ENCODE measurements at regions of chr5 and their contacts with region 1.

Region 1: DNA sequence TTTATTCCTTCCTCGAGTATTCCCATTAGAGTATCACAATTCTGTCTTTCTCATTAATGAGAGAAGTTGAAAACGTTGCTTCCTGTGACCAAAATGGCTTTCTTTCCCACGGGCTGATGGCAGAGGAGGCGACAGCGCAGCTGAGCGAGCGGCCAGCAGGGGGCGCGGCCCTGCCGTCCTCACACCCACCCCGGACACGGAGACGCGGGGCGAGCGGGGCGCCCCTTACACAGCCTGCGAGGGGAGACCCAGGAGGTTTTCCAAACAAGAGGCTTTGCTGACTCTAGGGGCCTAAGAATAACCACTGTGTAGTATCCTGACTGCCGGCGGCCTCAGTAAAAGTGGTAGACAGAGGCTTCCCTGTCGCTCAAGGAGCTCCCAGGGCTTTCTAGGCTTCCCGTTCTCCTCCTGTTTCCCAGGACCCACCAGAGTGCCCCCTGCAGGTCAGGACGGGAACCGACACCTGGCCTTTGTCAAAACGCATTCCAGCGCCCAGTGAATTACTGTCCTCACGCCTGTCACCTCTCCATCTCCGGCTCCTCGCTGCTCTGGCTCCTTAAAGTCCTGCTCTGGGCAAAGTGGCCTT is 27.3 kb upstream of the FGF1 start:
- DNase-seq: peak; percentile 92
- ATAC-seq: peak; percentile 97
- H3K4me3 Mint-ChIP-seq: peak overlapping the region; percentile 72
- H3K27ac Mint-ChIP-seq: peak overlapping the region; percentile 40
- H3K4me1 Mint-ChIP-seq: peaks cover 5% of the 10 kb centered on the region
- H3K27me3 Mint-ChIP-seq: no peaks in the 10 kb centered on the region
- CTCF ChIP-seq: peak; percentile 93

Region 2: GRCh38 chr5:142095651-142096330 is 617.4 kb before region 1 on chr5:
- CTCF ChIA-PET with region 1: no interaction called
- POLR2A ChIA-PET with region 1: no interaction called
- intact Hi-C with region 1: no loop called
- DNase-seq: peak; percentile 97
- ATAC-seq: peak; percentile 88
- H3K4me3 Mint-ChIP-seq: peak overlapping the region; percentile 51
- H3K27ac Mint-ChIP-seq: peak overlapping the region; percentile 93
- H3K4me1 Mint-ChIP-seq: peaks cover 78% of the 10 kb centered on the region
- H3K27me3 Mint-ChIP-seq: no peaks in the 10 kb centered on the region
- CTCF ChIP-seq: no peak

Region 3: GRCh38 chr5:142439207-142439860 is 273.9 kb before region 1 on chr5:
- CTCF ChIA-PET with region 1: no interaction called
- POLR2A ChIA-PET with region 1: no interaction called
- intact Hi-C with region 1: no loop called
- DNase-seq: no peak
- ATAC-seq: no peak
- H3K4me3 Mint-ChIP-seq: no peak overlapping the region
- H3K27ac Mint-ChIP-seq: no peak overlapping the region
- H3K4me1 Mint-ChIP-seq: peaks cover 10% of the 10 kb centered on the region
- H3K27me3 Mint-ChIP-seq: peaks cover 16% of the 10 kb centered on the region
- CTCF ChIP-seq: no peak

Region 4: DNA sequence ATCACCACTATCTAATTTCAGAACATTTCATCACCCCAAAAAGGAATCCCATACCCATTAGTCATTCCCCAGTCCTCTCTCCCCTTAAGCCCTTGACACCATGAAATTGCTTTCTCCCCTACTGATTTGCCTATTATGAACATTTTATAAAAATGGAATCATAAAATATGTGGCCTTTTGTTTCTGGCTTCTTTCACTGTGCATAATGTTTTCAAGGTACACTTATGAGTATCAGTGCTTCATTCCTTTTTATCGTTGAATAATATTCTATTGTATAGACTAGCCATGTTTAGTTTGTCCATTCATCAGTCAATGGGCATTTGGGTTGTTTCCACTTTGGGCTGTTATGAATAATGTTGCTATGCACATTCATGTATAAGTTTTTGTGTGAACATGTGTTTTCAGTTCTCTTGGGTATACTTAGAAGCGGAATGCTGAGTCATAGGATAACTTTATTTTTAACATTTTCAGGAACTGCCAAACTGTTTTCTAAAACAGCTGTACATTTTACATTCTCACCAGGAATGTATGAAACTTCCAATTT is 13.0 kb after region 1 on chr5:
- CTCF ChIA-PET with region 1: interaction called, 36 read pairs
- POLR2A ChIA-PET with region 1: no interaction called
- intact Hi-C with region 1: no loop called
- DNase-seq: no peak
- ATAC-seq: peak; percentile 49
- H3K4me3 Mint-ChIP-seq: no peak overlapping the region
- H3K27ac Mint-ChIP-seq: peak overlapping the region; percentile 35
- H3K4me1 Mint-ChIP-seq: peaks cover 9% of the 10 kb centered on the region
- H3K27me3 Mint-ChIP-seq: no peaks in the 10 kb centered on the region
- CTCF ChIP-seq: no peak

Region 5: DNA sequence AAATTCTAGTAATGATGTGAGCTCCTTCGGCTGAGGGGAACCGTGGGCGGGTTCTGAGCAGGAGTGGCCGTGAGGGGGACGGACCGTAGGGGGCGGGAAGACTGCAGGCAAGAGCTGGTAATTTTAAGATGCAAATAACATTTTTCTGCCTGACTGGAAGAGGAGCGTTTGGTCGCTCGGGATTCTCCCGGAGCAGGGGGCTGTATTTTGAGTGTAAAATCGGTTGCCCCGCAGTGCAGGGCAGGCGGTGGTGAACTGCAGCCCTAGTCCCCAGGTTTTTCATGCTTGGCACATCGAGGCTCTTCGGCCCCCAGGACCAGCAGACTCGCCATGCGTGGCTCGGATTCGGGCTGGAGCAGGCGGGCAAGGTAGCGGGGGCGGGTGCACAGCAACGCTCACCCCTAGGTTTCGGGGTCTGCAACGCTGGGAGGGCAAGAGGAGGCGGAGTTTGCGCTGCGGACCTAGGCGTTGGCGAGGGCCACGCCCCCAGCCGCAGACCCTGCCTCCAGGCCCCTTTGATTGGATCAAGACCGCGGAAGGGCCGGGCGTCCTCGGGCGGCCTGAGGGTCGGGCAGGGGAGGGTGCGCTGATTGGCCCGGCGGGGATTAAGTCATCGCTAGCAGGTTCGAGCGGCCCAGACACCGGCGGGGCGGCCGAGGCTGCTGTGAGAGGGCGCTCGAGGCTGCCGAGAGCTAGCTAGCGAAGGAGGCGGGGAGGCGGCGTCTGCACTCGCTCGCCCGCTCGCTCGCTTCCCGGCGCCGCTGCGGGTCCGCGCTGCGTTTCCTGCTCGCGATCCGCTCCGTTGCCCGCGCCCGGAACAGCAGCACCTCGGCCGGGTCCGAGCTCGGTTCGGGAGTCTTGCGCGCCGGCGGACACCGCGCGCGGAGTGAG is 56.8 kb after region 1 on chr5 and contains the start of gene ARHGAP26:
- CTCF ChIA-PET with region 1: interaction called, 14 read pairs
- POLR2A ChIA-PET with region 1: no interaction called
- intact Hi-C with region 1: no loop called
- DNase-seq: peak; percentile 96
- ATAC-seq: peak; percentile 93
- H3K4me3 Mint-ChIP-seq: peak within 1 kb of the TSS; percentile 94
- H3K27ac Mint-ChIP-seq: peak within 1 kb of the TSS; percentile 89
- H3K4me1 Mint-ChIP-seq: peaks cover 36% of the 10 kb centered on the region
- H3K27me3 Mint-ChIP-seq: no peaks in the 10 kb centered on the region
- CTCF ChIP-seq: no peak
- total RNA-seq, gene ARHGAP26: 12.7 to 18.0 TPM

Region 6: DNA sequence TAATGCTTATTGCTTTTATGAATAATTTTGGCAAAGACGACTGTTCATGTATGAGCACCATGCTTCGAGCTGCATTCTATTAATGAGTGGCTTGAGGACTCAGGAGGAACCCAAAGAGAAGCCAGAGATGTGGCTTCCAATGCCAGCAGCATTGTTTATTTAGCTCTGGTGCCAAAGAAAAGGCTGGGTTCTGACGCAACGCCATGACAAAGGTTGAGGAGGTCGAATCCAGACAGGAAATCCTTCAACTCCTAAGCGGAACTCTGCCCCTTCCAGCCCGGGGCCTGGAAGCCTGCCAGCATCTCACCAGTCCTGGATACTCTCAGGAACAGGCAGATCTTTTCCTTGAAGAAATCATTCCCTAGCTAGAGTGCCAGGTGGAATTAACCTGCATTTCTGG is 161.3 kb after region 1 on chr5:
- CTCF ChIA-PET with region 1: interaction called, 673 read pairs
- POLR2A ChIA-PET with region 1: no interaction called
- intact Hi-C with region 1: no loop called
- DNase-seq: no peak
- ATAC-seq: no peak
- H3K4me3 Mint-ChIP-seq: no peak overlapping the region
- H3K27ac Mint-ChIP-seq: no peak overlapping the region
- H3K4me1 Mint-ChIP-seq: peaks cover 7% of the 10 kb centered on the region
- H3K27me3 Mint-ChIP-seq: no peaks in the 10 kb centered on the region
- CTCF ChIP-seq: no peak

Region 7: DNA sequence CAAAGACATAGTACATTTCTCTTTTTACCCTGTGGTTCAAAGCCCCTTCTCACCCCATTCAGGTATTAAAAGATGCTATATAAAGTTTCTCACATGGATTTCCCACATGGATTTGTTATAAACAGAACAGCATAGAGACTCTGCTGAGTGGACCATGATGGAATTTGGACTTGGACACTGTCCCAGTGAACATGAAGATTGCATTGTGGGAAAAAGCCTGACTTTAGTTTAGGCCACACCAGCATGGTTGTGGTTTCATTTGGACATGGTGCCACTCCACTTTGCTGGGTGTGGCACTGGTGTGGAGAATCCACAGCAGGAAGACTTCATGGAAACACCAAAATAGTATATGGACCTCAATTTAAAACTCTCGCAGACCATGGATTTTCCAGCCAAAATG is 181.5 kb after region 1 on chr5:
- CTCF ChIA-PET with region 1: interaction called, 673 read pairs
- POLR2A ChIA-PET with region 1: no interaction called
- intact Hi-C with region 1: loop called (anchors 2 kb)
- DNase-seq: no peak
- ATAC-seq: no peak
- H3K4me3 Mint-ChIP-seq: no peak overlapping the region
- H3K27ac Mint-ChIP-seq: no peak overlapping the region
- H3K4me1 Mint-ChIP-seq: peaks cover 2% of the 10 kb centered on the region
- H3K27me3 Mint-ChIP-seq: no peaks in the 10 kb centered on the region
- CTCF ChIP-seq: no peak

Measured in activated CD8-positive, alpha-beta T cell treated with anti-CD3 and anti-CD28 coated beads for 36 hours (primary cell).